ENCODE measurements at regions of chr10 and their contacts with region 1.

Region 1: DNA sequence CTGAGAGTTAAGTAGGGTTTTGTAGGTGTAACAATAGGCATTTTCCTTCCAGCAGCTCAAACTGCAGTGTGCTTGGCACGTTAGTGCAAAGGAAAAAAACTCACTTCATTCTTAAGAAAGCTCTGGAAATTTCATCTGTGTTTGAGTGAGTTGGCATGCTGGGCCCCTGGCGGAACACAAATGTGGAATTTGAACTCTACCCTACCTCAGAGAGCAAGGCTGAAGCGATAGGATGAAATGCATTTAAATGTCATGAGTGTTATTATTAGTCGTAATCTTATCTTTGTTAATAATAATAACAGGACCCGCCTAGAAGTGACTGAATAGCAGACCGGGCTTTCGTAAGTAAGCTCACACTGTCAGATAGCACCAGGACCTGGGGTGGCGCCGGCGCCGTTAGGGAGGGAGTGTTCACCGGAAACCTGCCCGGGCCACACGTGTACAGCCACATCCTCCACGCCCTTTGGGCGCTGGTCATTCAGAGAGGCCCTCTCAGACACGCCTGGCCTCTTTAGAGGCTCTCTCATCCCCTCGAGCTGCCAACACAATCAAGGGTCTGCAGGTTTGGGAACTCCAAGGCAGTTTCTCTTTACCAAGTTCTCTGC is 63.5 kb downstream of the GRK5 start:
- DNase-seq: peak; percentile 12 to 76 (median 42)
- ATAC-seq: no peak
- H3K4me3 ChIP-seq: peak overlapping the region; percentile 44
- H3K4me3 Mint-ChIP-seq: peak overlapping the region; percentile 74
- H3K27ac ChIP-seq: peak overlapping the region in 1 of 2 donors; percentile 20
- H3K27ac Mint-ChIP-seq: peak overlapping the region; percentile 96
- H3K4me1 ChIP-seq: peaks cover 65% of the 10 kb centered on the region
- H3K4me1 Mint-ChIP-seq: peaks cover 69% of the 10 kb centered on the region
- H3K27me3 ChIP-seq: no peaks in the 10 kb centered on the region
- H3K27me3 Mint-ChIP-seq: no peaks in the 10 kb centered on the region
- CTCF ChIP-seq: no peak

Region 2: GRCh38 chr10:119283818-119284217 is 13.0 kb after region 1 on chr10:
- CTCF ChIA-PET with region 1: interaction called, 4 read pairs
- POLR2A ChIA-PET with region 1: interaction called, 8 read pairs
- intact Hi-C with region 1: loop called in 1 of 2 experiments (anchors 2 kb)
- DNase-seq: peak in 4 of 14 experiments; percentile 45 to 74 (median 66)
- ATAC-seq: peak; percentile 57
- H3K4me3 ChIP-seq: no peak overlapping the region
- H3K4me3 Mint-ChIP-seq: peak overlapping the region; percentile 79
- H3K27ac ChIP-seq: no peak overlapping the region
- H3K27ac Mint-ChIP-seq: peak overlapping the region; percentile 68
- H3K4me1 ChIP-seq: peaks cover 64% of the 10 kb centered on the region
- H3K4me1 Mint-ChIP-seq: peaks cover 91% of the 10 kb centered on the region
- H3K27me3 ChIP-seq: no peaks in the 10 kb centered on the region
- H3K27me3 Mint-ChIP-seq: no peaks in the 10 kb centered on the region
- CTCF ChIP-seq: no peak